Activated T-helper 2 cell treated with anti-CD3 and anti-CD28 coated beads, Interferon-gamma antibody, Interleukin-2, Interleukin-4, amounts not matched to agents 10 μg/mL and 5 μg/mL and 100 μg/mL, durations not matched to agents 14 hours and 24 hours and 36 hours (primary cell): ENCODE measurements at regions of chr17 and their contacts with region 1.

Region 1: DNA sequence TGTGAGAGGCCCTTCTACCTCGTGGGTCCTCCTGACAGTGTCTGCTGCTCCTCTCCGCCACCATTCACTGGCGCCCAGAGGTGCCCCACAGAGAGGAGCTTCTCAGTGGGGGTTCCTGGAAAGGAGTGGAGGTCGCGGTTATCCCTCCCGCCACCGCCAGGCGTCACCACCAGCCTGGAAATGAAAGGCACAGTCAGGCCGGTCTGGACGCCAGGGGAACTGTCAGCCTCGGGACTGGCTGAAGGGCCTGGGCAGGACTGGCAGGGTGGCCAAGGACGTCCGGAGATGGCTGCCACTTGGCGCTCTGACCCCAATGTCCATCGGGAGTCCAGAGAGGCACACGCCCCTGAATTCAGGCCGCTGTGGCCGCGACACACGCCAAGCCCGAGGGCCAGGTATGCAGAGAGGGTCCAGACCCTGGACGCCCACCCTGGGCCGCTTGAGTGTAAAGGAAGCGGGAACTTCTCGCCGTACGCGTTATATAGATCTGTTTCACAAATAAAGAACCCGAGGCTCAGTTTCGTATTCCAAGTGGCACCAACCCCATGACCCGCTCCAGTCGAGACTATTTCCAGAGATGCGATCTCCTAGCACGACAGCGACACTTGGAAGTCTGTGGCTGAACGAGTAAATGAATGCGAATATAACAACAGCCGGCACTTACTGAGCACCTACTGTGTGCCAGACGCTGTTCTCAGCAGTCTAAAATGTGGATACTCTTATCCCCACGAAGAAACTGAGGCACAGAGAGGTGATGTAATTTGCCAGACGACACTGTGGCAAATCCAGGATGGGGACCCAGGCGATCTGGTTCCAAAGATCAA is 7.6 kb upstream of the NXPH3 start:
- DNase-seq: peak; percentile 73
- H3K4me3 Mint-ChIP-seq: peak overlapping the region; percentile 67
- H3K27ac Mint-ChIP-seq: no peak overlapping the region
- H3K4me1 Mint-ChIP-seq: peaks cover 28% of the 10 kb centered on the region
- H3K27me3 Mint-ChIP-seq: peaks cover 30% of the 10 kb centered on the region

Region 2: DNA sequence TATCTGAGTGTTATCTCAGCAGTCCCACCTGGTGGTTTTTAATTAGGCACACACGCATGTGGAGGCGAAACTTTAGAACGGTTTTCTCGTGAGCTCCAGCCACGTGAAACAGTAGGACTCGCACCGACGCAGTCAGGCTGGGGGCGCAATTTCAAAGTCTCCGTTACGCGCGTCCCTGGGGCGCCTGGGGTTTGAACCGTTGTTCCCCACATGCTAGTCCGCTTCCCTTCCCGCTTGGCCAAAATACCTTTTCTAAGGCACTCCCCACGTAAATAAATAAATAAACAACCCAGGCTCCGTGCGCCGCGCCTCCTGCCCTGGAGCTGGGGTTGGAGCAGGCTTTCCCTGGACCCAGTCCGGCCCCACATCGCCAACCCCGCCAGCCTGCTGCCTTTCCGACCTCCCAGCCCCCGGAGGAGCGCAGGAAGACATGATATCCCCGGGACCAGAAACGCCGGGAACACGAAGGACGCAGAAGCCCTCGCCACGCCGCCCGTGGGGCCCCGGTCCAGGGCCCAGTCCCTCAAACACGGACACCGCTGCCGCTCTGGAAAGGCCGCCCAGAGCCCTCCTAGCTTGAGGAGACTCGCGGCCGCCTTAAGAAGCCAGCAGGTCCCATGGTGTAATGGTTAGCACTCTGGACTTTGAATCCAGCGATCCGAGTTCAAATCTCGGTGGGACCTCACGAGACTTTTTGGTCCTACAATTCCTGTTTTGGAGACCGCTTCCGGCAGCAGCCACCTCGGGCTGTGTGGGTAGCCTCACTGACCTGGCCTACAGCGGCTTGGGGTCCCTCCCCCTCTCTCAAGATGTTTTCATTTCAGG is 376.0 kb before region 1 on chr17:
- intact Hi-C with region 1: loop called (anchors 10 kb)
- DNase-seq: peak; percentile 81
- H3K4me3 Mint-ChIP-seq: peak overlapping the region; percentile 84
- H3K27ac Mint-ChIP-seq: peak overlapping the region; percentile 93
- H3K4me1 Mint-ChIP-seq: peaks cover 37% of the 10 kb centered on the region
- H3K27me3 Mint-ChIP-seq: no peaks in the 10 kb centered on the region

Region 3: DNA sequence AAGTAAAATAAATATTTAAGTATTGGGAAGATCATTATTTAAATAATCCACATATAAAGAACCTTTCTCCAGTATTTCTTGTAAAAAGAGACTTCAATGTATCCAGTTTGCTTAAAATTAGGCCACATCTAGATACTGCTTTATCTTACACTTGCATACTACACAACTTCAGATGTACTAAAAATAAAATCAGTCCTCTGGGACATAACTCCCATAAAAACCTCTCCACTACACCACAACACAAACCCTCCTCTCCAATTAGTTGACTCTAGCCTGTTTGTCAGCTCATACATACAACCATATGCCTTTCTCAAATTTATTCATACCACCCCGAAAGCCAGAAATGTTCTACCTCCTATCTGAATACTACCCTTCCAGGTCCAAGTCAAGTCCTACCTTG is 88.2 kb after region 1 on chr17:
- intact Hi-C with region 1: no loop called
- DNase-seq: no peak
- H3K4me3 Mint-ChIP-seq: no peak overlapping the region
- H3K27ac Mint-ChIP-seq: no peak overlapping the region
- H3K4me1 Mint-ChIP-seq: peaks cover 14% of the 10 kb centered on the region
- H3K27me3 Mint-ChIP-seq: no peaks in the 10 kb centered on the region

Region 4: GRCh38 chr17:49694847-49695683 is 127.0 kb after region 1 on chr17:
- intact Hi-C with region 1: loop called (anchors 1 kb)
- DNase-seq: peak; percentile 46
- H3K4me3 Mint-ChIP-seq: no peak overlapping the region
- H3K27ac Mint-ChIP-seq: peak overlapping the region; percentile 88
- H3K4me1 Mint-ChIP-seq: peaks cover 22% of the 10 kb centered on the region
- H3K27me3 Mint-ChIP-seq: no peaks in the 10 kb centered on the region

Region 5: DNA sequence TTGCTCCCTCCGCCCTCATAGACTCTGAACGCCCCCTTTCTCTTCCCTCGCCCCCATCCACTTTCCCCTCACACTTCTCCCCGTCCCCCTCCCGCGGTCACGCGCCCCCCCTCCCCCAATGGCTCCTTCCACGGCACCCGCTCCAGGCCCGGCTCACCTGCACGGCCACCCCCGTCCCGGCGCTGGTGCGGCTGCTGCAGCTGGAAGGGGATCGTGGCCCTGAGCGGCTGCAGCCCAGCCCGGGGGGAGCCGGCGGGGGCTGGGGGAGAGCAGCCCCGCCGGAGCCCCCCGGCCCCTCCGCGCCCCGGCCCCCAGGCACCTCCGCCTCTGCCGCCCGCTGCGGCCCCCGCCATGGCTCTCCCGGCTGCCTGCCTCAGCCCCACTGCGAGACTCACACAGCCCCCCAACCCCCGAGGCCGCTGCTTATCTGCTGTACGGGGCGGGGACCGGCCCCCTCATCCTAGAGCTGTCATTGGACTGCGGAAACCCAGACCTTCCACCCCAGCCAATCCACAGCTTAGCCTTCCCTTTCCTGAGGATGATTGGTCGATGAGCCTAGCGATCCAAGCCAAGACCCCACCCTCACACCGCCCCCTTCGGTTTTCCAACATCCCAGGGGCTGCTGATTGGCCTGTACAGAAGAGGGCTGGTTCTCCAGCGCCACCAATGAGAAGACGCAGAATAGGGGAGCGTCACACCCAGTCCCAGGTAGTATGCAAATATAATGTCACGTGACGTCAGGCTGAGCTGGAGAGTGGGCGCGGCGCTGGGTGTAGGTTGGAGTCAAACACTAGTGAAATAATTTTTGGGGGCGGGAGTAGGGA is 195.9 kb after region 1 on chr17 and contains the start of gene FAM117A:
- intact Hi-C with region 1: loop called (anchors 5 kb)
- DNase-seq: peak; percentile 97
- H3K4me3 Mint-ChIP-seq: peak within 1 kb of the TSS; percentile 92
- H3K27ac Mint-ChIP-seq: peak within 1 kb of the TSS; percentile 87
- H3K4me1 Mint-ChIP-seq: peaks cover 43% of the 10 kb centered on the region
- H3K27me3 Mint-ChIP-seq: peaks cover 26% of the 10 kb centered on the region
- total RNA-seq, gene FAM117A: 12.2 and 15.8 TPM in 2 replicates

Region 6: GRCh38 chr17:49788478-49789242 is 220.6 kb after region 1 on chr17 and contains the start of gene KAT7:
- intact Hi-C with region 1: loop called (anchors 2 kb)
- DNase-seq: peak; percentile 98
- H3K4me3 Mint-ChIP-seq: peak within 1 kb of the TSS; percentile 91
- H3K27ac Mint-ChIP-seq: peak within 1 kb of the TSS; percentile 97
- H3K4me1 Mint-ChIP-seq: peaks cover 29% of the 10 kb centered on the region
- H3K27me3 Mint-ChIP-seq: no peaks in the 10 kb centered on the region
- total RNA-seq, gene KAT7: 62.1 and 65.0 TPM in 2 replicates

Region 7: GRCh38 chr17:49851387-49852291 is 283.6 kb after region 1 on chr17:
- intact Hi-C with region 1: loop called (anchors 2 kb)
- DNase-seq: peak; percentile 53
- H3K4me3 Mint-ChIP-seq: peak overlapping the region; percentile 78
- H3K27ac Mint-ChIP-seq: peak overlapping the region; percentile 67
- H3K4me1 Mint-ChIP-seq: peaks cover 8% of the 10 kb centered on the region
- H3K27me3 Mint-ChIP-seq: peaks cover 10% of the 10 kb centered on the region

Region 8: GRCh38 chr17:49997791-49998703 is 430.0 kb after region 1 on chr17:
- intact Hi-C with region 1: loop called (anchors 2 kb)
- DNase-seq: peak; percentile 77
- H3K4me3 Mint-ChIP-seq: no peak overlapping the region
- H3K27ac Mint-ChIP-seq: no peak overlapping the region
- H3K4me1 Mint-ChIP-seq: peaks cover 20% of the 10 kb centered on the region
- H3K27me3 Mint-ChIP-seq: peaks cover 65% of the 10 kb centered on the region